CD4-positive, alpha-beta memory T cell (primary cell): ENCODE measurements at regions of chr17 and their contacts with region 1.

Region 1: GRCh38 chr17:16363749-16364536 is 10.7 kb upstream of the CENPV start:
- DNase-seq: peak; percentile 58 to 69 (median 62)
- H3K4me3 ChIP-seq: no peak overlapping the region
- H3K4me3 Mint-ChIP-seq: no peak overlapping the region
- H3K27ac ChIP-seq: no peak overlapping the region
- H3K27ac Mint-ChIP-seq: peak overlapping the region in 2 of 7 donors; percentile 42 to 43
- H3K4me1 ChIP-seq: no peaks in the 10 kb centered on the region
- H3K4me1 Mint-ChIP-seq: peaks cover 0 to 12% (median 2%) of the 10 kb centered on the region in 4 donors
- H3K27me3 ChIP-seq: no peaks in the 10 kb centered on the region
- H3K27me3 Mint-ChIP-seq: no peaks in the 10 kb centered on the region

Region 2: DNA sequence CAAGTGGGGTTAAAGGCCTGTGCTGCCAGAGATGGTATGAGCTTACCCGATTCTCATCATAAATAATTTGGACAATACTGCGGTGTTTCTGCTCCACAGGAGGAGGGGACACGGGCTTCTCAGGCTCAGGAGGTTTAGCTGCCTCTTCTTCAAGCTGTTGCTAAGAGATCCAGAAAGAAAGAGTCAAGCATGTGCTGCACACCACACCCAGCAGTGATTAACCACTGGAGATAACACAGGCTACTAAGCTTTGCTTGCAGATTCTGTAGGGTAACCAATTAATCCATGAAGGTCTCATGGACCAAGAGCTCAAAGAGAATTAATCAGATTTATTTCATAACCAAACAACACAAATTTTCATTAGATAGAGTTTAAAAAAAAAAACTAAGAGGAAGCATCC is 205.2 kb before region 1 on chr17:
- CTCF ChIA-PET with region 1: no interaction called
- POLR2A ChIA-PET with region 1: no interaction called
- intact Hi-C with region 1: no loop called
- DNase-seq: no peak
- H3K4me3 ChIP-seq: no peak overlapping the region
- H3K4me3 Mint-ChIP-seq: no peak overlapping the region
- H3K27ac ChIP-seq: no peak overlapping the region
- H3K27ac Mint-ChIP-seq: no peak overlapping the region
- H3K4me1 ChIP-seq: no peaks in the 10 kb centered on the region
- H3K4me1 Mint-ChIP-seq: peaks cover 6 to 13% (median 10%) of the 10 kb centered on the region in 4 donors
- H3K27me3 ChIP-seq: no peaks in the 10 kb centered on the region
- H3K27me3 Mint-ChIP-seq: no peaks in the 10 kb centered on the region

Region 3: GRCh38 chr17:16304830-16305229 is 59.1 kb before region 1 on chr17:
- CTCF ChIA-PET with region 1: interaction called, 23 read pairs
- POLR2A ChIA-PET with region 1: no interaction called
- intact Hi-C with region 1: no loop called
- DNase-seq: peak in 1 of 5 donors; percentile 17
- H3K4me3 ChIP-seq: no peak overlapping the region
- H3K4me3 Mint-ChIP-seq: no peak overlapping the region
- H3K27ac ChIP-seq: no peak overlapping the region
- H3K27ac Mint-ChIP-seq: peak overlapping the region in 1 of 7 donors; percentile 24
- H3K4me1 ChIP-seq: no peaks in the 10 kb centered on the region
- H3K4me1 Mint-ChIP-seq: peaks cover 0 to 3% (median 2%) of the 10 kb centered on the region in 4 donors
- H3K27me3 ChIP-seq: no peaks in the 10 kb centered on the region
- H3K27me3 Mint-ChIP-seq: no peaks in the 10 kb centered on the region

Region 4: DNA sequence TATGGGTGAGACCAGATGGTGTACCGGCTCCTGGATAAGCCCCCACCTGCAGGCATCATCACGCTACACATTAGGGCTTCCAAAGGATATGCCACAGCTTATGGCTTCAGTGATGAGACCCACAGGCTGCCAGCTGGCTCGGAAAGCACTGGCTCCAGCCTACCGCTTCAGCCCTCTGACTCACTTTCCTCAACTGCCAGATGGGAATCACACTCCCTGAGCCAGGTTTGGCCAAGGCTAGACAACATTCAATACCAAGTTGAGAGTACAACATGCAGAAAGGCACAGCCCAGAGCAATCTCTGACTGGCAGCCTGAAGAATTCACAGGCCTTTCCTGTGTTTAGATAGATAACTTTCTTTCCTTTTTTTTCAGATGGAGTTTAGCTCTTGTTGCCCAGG is 21.0 kb before region 1 on chr17:
- CTCF ChIA-PET with region 1: interaction called, 12 read pairs
- POLR2A ChIA-PET with region 1: no interaction called
- intact Hi-C with region 1: no loop called
- DNase-seq: no peak
- H3K4me3 ChIP-seq: no peak overlapping the region
- H3K4me3 Mint-ChIP-seq: no peak overlapping the region
- H3K27ac ChIP-seq: no peak overlapping the region
- H3K27ac Mint-ChIP-seq: no peak overlapping the region
- H3K4me1 ChIP-seq: no peaks in the 10 kb centered on the region
- H3K4me1 Mint-ChIP-seq: no peaks in the 10 kb centered on the region
- H3K27me3 ChIP-seq: no peaks in the 10 kb centered on the region
- H3K27me3 Mint-ChIP-seq: no peaks in the 10 kb centered on the region

Region 5: GRCh38 chr17:16380640-16381495 is 16.9 kb after region 1 on chr17 and contains the start of gene UBB:
- CTCF ChIA-PET with region 1: interaction called, 60 read pairs
- POLR2A ChIA-PET with region 1: interaction called, 13 read pairs
- intact Hi-C with region 1: no loop called
- DNase-seq: peak; percentile 93 to 98 (median 97)
- H3K4me3 ChIP-seq: peak within 1 kb of the TSS; percentile 72 to 94
- H3K4me3 Mint-ChIP-seq: peak within 1 kb of the TSS; percentile 86 to 99 (median 94)
- H3K27ac ChIP-seq: peak within 1 kb of the TSS; percentile 91
- H3K27ac Mint-ChIP-seq: peak within 1 kb of the TSS; percentile 94 to 100 (median 99)
- H3K4me1 ChIP-seq: peaks cover 25% of the 10 kb centered on the region
- H3K4me1 Mint-ChIP-seq: peaks cover 28 to 49% (median 39%) of the 10 kb centered on the region in 4 donors
- H3K27me3 ChIP-seq: no peaks in the 10 kb centered on the region
- H3K27me3 Mint-ChIP-seq: peaks cover 0 to 4% of the 10 kb centered on the region in 2 donors
- total RNA-seq, gene UBB: 523 to 560 TPM

Region 6: DNA sequence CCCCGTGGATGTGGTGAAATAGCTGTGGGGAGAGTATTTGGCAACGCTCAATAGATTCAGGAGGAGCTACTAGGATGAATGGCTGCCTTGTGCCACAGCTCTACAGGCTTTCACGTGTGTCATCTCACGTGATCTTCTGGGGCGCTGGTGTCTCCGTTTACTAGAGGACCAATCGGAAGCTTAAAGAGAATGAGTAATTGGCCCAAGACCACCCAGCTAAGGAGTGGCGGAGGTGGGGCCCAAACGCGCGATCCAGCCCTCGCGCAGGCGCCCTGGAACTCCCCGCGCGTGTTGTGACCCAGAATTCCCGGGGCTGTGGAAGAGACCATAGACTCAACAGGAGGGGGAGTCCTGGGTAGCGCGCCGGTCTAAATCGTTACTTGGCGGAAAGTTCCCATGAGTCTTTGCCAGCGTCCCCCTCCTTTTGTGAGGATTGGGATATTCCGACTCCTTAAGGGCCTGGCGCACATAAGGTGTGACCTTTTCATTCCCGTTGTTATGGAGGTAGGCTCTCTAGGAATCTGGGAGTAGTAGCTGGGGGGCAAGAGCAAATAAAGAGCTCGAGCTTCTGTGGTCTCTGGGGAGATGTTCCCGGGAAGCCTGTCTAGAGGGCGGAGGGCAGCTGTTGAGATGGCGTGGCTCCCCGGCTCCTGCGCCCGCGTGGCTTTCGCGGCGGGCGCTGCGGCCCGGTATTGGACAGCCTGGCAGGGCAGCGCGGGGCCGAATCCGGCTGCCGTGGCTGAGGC is 74.8 kb after region 1 on chr17:
- CTCF ChIA-PET with region 1: interaction called, 13 read pairs
- POLR2A ChIA-PET with region 1: interaction called, 7 read pairs
- intact Hi-C with region 1: no loop called
- DNase-seq: peak; percentile 94 to 97 (median 96)
- H3K4me3 ChIP-seq: peak overlapping the region; percentile 78 to 95
- H3K4me3 Mint-ChIP-seq: peak overlapping the region; percentile 98 to 100 (median 99)
- H3K27ac ChIP-seq: peak overlapping the region; percentile 94
- H3K27ac Mint-ChIP-seq: peak overlapping the region; percentile 96 to 100 (median 99)
- H3K4me1 ChIP-seq: peaks cover 45% of the 10 kb centered on the region
- H3K4me1 Mint-ChIP-seq: peaks cover 32 to 57% (median 43%) of the 10 kb centered on the region in 4 donors
- H3K27me3 ChIP-seq: no peaks in the 10 kb centered on the region
- H3K27me3 Mint-ChIP-seq: no peaks in the 10 kb centered on the region

Region 7: DNA sequence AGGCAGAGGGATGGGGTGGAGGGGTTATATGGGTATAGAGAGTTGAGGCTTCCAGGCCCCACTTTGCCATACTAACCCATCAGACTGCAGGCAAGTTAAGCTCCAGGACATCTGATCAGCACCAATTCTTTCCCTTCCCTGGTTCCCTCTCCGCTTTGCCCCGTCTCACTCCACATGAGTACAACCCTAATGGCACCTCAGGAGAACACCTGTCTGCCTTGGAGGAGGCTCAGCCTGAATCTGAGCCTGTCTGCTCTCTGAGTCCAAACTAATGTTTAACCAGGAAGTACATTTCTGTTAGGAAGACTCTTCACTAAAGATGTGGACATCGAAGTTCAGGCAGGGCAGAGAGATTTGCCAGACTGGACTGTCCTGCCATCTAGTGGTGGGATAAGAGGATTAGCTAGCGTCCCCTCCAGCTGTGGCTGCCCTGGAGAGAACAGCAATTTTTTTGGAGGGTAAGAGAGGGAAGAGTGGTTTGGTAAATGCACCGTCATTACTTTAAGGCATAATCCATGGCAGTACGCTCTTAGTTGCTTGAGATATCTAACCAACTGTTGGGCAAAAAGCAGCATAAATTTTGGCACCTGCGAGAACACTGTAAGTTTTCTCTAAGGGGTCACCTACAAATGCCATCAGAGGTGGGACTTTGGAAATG is 157.3 kb after region 1 on chr17:
- CTCF ChIA-PET with region 1: interaction called, 150 read pairs
- POLR2A ChIA-PET with region 1: interaction called, 3 read pairs
- intact Hi-C with region 1: loop called (anchors 1 kb)
- DNase-seq: peak; percentile 64 to 71 (median 68)
- H3K4me3 ChIP-seq: no peak overlapping the region
- H3K4me3 Mint-ChIP-seq: no peak overlapping the region
- H3K27ac ChIP-seq: no peak overlapping the region
- H3K27ac Mint-ChIP-seq: peak overlapping the region in 2 of 7 donors; percentile 48 to 63
- H3K4me1 ChIP-seq: peaks cover 3% of the 10 kb centered on the region
- H3K4me1 Mint-ChIP-seq: peaks cover 0 to 5% (median 2%) of the 10 kb centered on the region in 4 donors
- H3K27me3 ChIP-seq: no peaks in the 10 kb centered on the region
- H3K27me3 Mint-ChIP-seq: peaks cover 20 to 21% of the 10 kb centered on the region in 2 donors